OCI-LY7 (cell line): ENCODE measurements at regions of chr6 and their contacts with region 1.

Region 1: DNA sequence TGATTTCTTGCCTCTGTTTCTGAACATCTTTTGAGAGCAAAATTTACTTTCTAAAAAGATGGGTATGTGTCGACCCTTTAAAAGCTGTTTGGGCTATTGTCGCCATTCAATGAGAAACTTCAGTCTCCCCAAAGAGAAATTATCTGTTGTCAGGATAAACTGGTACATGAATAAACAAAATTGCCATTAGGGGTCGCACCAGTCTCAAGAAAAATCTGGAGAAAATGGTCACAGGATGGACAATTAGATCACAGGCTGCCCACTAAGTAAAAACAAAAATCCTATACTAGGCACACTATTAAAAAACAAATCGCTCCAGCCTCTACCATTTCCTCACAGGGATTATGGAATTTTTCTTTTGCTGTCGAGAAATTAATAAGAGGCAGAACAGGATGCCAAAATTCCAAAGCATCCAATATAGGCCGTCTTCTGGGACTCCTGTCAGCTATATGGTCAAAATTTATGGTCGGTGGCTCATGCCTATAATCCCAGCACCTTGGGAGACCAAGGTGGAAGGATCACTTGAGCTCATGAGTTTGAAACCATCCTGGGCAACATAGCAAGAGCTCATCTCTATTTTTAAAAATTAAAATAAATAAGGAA is 5.5 kb upstream of the HLA-E start:
- DNase-seq: peak; percentile 69
- H3K4me3 ChIP-seq: no peak overlapping the region
- H3K27ac ChIP-seq: no peak overlapping the region
- H3K4me1 ChIP-seq: peaks cover 5% of the 10 kb centered on the region
- CTCF ChIP-seq: peak; percentile 92

Region 2: DNA sequence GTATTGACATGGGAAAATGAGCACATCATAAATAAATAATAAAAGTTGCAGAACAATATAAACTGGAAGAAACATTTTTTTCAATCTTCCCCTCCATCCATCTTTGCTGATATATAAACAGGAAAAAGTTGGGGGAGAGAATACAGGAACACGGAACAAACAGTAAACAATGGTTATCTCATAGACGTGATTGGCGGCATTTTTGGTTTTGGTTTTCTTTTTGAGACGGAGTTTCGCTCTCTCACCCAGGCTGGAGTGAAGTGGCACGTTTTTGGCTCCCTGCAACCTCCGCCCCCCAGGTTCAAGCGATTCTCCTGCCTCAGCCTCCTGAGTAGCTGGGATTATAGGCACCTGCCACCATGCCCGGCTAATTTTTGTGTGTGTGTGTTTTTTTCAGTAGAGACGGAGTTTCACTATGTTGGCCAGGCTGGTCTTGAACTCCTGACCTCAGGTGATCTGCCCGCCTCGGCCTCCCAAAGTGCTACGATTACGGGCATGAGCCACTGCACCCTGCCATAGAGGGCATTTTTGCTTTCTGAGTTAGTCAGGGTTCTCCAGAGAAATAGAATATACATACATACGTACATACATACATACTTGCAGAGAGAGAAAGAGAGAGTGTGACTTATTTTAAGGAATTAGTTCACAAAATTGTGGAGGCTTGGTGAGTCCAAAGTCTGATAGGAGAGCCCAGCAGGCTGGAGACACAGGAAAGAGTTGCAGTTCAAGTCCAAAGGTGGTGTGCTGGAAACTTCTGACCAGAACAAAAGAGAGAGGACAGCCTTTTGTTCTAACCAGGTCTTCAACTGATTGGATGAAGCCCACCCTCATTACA is 49.9 kb after region 1 on chr6:
- CTCF ChIA-PET with region 1: interaction called, 10 read pairs
- POLR2A ChIA-PET with region 1: interaction called, 3 read pairs
- intact Hi-C with region 1: loop called (anchors 1 kb)
- DNase-seq: no peak
- H3K4me3 ChIP-seq: no peak overlapping the region
- H3K27ac ChIP-seq: no peak overlapping the region
- H3K4me1 ChIP-seq: no peaks in the 10 kb centered on the region
- CTCF ChIP-seq: no peak

Region 3: DNA sequence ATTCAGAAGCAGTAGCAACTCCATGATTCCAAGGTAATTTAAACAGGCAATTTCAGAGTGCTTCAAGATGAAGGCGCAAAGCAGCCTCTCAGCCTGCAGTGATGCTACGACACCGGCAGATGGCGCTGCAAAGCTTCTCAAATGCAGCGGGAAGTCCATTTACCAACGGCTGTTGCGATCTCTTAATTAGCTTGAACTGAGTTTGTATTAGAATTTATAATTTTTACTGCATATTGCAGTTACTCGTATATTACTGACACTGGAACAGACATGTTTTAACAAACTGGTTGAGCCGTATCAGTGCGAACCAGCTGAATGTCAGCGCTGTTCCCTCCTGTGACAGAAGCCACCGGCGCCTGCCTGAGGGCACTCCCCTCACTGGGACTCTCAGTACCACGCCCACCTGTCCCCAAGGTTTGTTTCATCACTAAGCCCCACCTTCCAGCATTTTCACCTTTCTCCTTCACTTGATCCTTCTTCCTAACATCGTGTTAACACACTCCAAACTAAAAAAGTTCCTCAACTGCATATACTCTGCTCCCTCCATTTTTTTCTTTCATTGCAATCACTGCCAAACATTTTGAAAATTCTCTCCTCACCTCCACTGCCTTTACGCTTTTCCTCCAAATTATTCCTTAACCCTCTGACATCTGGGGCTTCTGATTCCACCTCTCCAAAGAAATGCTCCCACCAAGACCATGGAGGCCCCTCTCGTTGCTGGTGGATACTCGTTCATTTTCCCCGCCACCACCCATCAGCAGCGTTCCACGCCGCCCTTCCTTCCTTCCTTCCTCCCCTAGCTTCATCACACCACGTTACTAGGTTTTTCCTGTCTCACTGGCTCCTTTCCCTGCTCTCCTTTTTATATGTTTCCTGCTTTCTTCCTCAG is 58.0 kb after region 1 on chr6:
- CTCF ChIA-PET with region 1: interaction called, 11 read pairs
- POLR2A ChIA-PET with region 1: no interaction called
- intact Hi-C with region 1: loop called (anchors 1 kb)
- DNase-seq: peak; percentile 87
- H3K4me3 ChIP-seq: peak overlapping the region; percentile 46
- H3K27ac ChIP-seq: peak overlapping the region; percentile 20
- H3K4me1 ChIP-seq: peaks cover 15% of the 10 kb centered on the region
- CTCF ChIP-seq: peak; percentile 100

Region 4: GRCh38 chr6:30600451-30600961 is 116.7 kb after region 1 on chr6:
- CTCF ChIA-PET with region 1: interaction called, 4 read pairs
- POLR2A ChIA-PET with region 1: no interaction called
- intact Hi-C with region 1: loop called (anchors 1 kb)
- DNase-seq: no peak
- H3K4me3 ChIP-seq: no peak overlapping the region
- H3K27ac ChIP-seq: no peak overlapping the region
- H3K4me1 ChIP-seq: no peaks in the 10 kb centered on the region
- CTCF ChIP-seq: no peak

Region 5: GRCh38 chr6:30672445-30673253 is 188.9 kb after region 1 on chr6 and contains the start of gene DHX16:
- CTCF ChIA-PET with region 1: no interaction called
- POLR2A ChIA-PET with region 1: no interaction called
- intact Hi-C with region 1: loop called (anchors 1 kb)
- DNase-seq: peak; percentile 97
- H3K4me3 ChIP-seq: peak within 1 kb of the TSS; percentile 89
- H3K27ac ChIP-seq: no peak within 1 kb of the TSS
- H3K4me1 ChIP-seq: peaks cover 12% of the 10 kb centered on the region
- CTCF ChIP-seq: peak; percentile 97
- total RNA-seq, gene DHX16: 27.1 and 30.5 TPM in 2 replicates

Region 6: DNA sequence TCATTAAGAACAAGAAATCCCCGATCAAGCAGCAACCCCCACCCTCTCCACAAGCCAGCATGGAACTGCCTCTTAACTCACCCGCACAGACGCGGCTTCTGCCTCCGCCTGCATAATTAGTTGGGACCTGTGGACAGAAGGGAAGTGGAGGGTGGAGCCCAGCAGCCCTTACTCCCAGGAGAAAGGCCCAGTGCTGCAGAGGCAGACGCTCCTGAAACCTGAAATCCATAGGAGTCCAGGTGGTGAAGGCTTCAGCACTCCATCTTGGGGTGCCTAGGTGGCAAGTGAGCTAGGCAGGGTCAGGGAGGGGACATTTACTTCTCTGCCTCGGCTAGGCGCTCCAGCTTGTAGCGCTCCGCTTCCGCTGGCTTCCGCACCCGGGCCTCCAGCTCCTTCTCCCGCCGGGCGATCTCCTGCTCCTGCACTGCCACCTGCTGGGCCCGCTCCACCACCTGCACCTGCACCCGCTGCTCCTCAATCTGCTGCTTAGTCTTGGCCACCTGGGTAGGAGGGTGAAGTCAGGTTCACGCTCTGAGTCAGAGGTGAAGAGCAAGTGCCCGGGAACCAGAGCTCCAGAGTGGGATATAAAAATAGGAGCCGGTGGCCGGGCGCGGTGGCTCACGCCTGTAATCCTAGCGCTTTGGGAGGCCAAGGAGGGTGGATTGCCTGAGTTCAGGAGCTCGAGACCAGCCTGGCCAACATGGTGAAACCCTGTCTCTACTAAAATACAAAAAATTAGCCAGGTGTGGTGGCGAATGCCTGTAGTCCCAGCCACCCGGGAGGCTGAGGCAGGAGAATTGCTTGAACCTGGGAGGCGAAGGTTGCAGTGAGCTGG is 247.0 kb after region 1 on chr6:
- CTCF ChIA-PET with region 1: no interaction called
- POLR2A ChIA-PET with region 1: no interaction called
- intact Hi-C with region 1: loop called (anchors 5 kb)
- DNase-seq: peak; percentile 89
- H3K4me3 ChIP-seq: peak overlapping the region; percentile 18
- H3K27ac ChIP-seq: no peak overlapping the region
- H3K4me1 ChIP-seq: peaks cover 33% of the 10 kb centered on the region
- CTCF ChIP-seq: peak; percentile 86